B cell (primary cell): ENCODE measurements at regions of chr1 and their contacts with region 1.

Region 1: DNA sequence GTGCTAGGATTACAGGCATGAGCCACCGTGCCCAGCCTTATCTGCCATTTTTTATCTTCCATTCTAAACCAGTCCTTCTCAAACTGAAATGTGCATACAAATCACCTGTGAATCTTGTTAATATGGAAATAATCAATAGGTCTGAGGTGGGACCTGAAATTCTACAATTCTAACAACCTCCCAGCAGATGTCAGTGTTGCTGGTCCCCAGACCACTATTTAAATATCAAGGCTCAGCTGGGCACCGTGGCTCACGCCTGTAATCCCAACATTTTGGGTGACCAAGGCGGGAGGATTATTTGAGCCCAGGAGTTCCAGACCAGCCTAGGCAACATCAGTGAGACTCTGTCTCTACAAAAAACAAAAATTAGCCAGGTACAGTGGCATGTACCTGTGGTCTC is 4.1 kb downstream of the UQCRHL start:
- DNase-seq: peak; percentile 68
- ATAC-seq: peak; percentile 53
- H3K4me3 ChIP-seq: no peak overlapping the region
- H3K4me3 Mint-ChIP-seq: no peak overlapping the region
- H3K27ac ChIP-seq: no peak overlapping the region
- H3K27ac Mint-ChIP-seq: no peak overlapping the region
- H3K4me1 ChIP-seq: no peaks in the 10 kb centered on the region
- H3K4me1 Mint-ChIP-seq: no peaks in the 10 kb centered on the region
- H3K27me3 ChIP-seq: peaks cover 0 to 2% (median 0%) of the 10 kb centered on the region in 4 experiments
- H3K27me3 Mint-ChIP-seq: peaks cover 7% of the 10 kb centered on the region
- CTCF ChIP-seq: peak; percentile 67

Region 2: DNA sequence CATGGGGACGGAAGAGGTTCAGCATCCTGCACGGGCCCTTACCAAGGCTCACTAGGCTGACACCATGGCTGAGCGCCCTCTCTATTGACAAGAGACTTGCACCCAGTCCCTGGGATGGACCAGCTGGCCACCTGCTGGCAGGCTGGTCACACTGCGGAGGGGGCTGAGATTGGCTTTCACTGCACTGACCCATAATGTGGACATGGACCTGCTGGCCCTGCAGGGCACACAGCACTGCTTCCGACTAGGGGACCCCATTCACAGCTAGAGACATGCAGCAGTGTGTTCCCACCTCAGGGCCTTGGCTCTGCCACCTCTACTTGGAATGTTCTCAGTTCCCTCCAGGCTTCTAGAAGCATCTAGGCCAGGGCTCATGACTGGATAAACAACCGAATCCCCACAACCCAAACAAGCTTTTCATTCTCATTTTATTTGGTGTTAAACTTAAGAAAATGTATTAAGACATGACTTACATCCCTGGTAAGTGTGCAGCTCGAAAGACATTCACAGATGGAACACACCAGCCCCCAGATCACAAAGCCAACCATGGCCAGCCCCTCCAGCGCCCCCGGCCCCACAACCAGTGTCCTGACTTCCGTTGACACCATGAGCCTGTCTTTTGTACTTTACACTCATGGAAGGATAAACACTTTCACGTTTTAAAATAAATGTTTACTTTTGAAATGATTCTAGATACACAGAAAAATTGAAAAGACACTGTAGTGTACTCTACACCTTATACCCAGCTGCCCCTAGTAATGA is 191.4 kb after region 1 on chr1:
- CTCF ChIA-PET with region 1: interaction called, 17 read pairs
- POLR2A ChIA-PET with region 1: no interaction called
- intact Hi-C with region 1: loop called (anchors 5 kb)
- DNase-seq: peak; percentile 53
- ATAC-seq: peak; percentile 69
- H3K4me3 ChIP-seq: no peak overlapping the region
- H3K4me3 Mint-ChIP-seq: no peak overlapping the region
- H3K27ac ChIP-seq: no peak overlapping the region
- H3K27ac Mint-ChIP-seq: no peak overlapping the region
- H3K4me1 ChIP-seq: no peaks in the 10 kb centered on the region
- H3K4me1 Mint-ChIP-seq: no peaks in the 10 kb centered on the region
- H3K27me3 ChIP-seq: peaks cover 0 to 7% (median under 1%) of the 10 kb centered on the region in 4 experiments
- H3K27me3 Mint-ChIP-seq: no peaks in the 10 kb centered on the region
- CTCF ChIP-seq: peak; percentile 62

Region 3: GRCh38 chr1:16032388-16033103 is 229.2 kb after region 1 on chr1:
- CTCF ChIA-PET with region 1: interaction called, 4 read pairs
- POLR2A ChIA-PET with region 1: no interaction called
- intact Hi-C with region 1: loop called (anchors 1 kb)
- DNase-seq: peak; percentile 72
- ATAC-seq: peak; percentile 97
- H3K4me3 ChIP-seq: no peak overlapping the region
- H3K4me3 Mint-ChIP-seq: no peak overlapping the region
- H3K27ac ChIP-seq: no peak overlapping the region
- H3K27ac Mint-ChIP-seq: no peak overlapping the region
- H3K4me1 ChIP-seq: no peaks in the 10 kb centered on the region
- H3K4me1 Mint-ChIP-seq: peaks cover 5% of the 10 kb centered on the region
- H3K27me3 ChIP-seq: peaks cover 0 to 21% (median 5%) of the 10 kb centered on the region in 4 experiments
- H3K27me3 Mint-ChIP-seq: peaks cover 38% of the 10 kb centered on the region
- CTCF ChIP-seq: peak; percentile 71

Region 4: GRCh38 chr1:16055613-16056520 is 252.5 kb after region 1 on chr1:
- CTCF ChIA-PET with region 1: interaction called, 15 read pairs
- POLR2A ChIA-PET with region 1: no interaction called
- intact Hi-C with region 1: loop called (anchors 1 kb)
- DNase-seq: peak; percentile 91
- ATAC-seq: peak; percentile 100
- H3K4me3 ChIP-seq: no peak overlapping the region
- H3K4me3 Mint-ChIP-seq: no peak overlapping the region
- H3K27ac ChIP-seq: no peak overlapping the region
- H3K27ac Mint-ChIP-seq: no peak overlapping the region
- H3K4me1 ChIP-seq: peaks cover 4 to 5% of the 10 kb centered on the region in 2 donors
- H3K4me1 Mint-ChIP-seq: peaks cover 6% of the 10 kb centered on the region
- H3K27me3 ChIP-seq: peaks cover 0 to 2% (median 0%) of the 10 kb centered on the region in 4 experiments
- H3K27me3 Mint-ChIP-seq: peaks cover 9% of the 10 kb centered on the region
- CTCF ChIP-seq: peak; percentile 74